Left ventricle myocardium inferior (tissue), 1 donor: ENCODE measurements at regions of chr3 and their contacts with region 1.

Region 1: DNA sequence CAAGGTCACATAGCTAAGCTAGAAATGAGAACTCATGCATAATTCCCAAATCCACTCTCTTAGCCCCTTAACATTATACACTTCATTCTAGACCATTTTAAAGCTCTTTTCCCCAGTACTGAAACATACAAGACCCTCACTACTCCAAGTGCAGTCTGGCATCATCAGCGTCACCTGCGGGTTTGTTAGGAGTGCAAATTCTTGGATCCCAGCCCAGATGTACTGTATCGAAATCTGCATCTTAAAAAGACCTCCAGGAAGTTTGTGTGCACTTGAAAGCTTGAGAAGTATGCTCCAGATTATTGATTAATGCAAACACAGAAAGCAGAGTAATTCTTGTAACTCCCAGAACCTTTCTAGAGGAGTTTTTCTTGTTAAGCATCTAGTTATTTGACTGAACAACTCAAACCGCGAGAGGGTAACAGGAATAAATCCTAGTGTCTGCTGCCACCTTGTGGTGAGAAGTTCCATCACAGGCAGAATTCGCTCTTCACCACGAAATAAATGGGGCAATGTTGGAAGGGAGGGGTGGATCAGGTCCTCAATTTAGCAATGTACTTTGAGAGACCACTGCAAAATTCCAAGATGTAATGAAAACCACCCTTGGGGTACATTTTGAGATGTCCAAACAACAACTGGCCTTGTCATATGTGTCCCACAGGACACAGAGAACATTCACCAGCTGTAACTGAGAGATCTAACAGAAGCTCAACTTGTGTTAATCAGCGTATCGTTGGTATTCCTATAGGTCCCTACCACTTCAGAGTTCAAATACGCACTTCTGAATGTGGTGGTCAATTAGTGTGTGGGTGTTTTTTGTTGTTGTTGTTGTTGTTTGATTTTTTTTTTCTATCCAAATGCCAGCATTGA is 583 bp upstream of the C3orf49 start:
- DNase-seq: peak; percentile 20
- H3K4me3 ChIP-seq: no peak overlapping the region
- H3K27ac ChIP-seq: no peak overlapping the region
- H3K4me1 ChIP-seq: peaks cover 4% of the 10 kb centered on the region
- H3K27me3 ChIP-seq: no peaks in the 10 kb centered on the region
- CTCF ChIP-seq: peak; percentile 91

Region 2: GRCh38 chr3:63349583-63350521 is 468.7 kb before region 1 on chr3:
- intact Hi-C with region 1: loop called (anchors 2 kb)
- DNase-seq: no peak
- H3K4me3 ChIP-seq: no peak overlapping the region
- H3K27ac ChIP-seq: no peak overlapping the region
- H3K4me1 ChIP-seq: no peaks in the 10 kb centered on the region
- H3K27me3 ChIP-seq: peaks cover 51% of the 10 kb centered on the region
- CTCF ChIP-seq: peak; percentile 79

Region 3: GRCh38 chr3:63753567-63753966 is 64.9 kb before region 1 on chr3:
- intact Hi-C with region 1: no loop called
- DNase-seq: no peak
- H3K4me3 ChIP-seq: no peak overlapping the region
- H3K27ac ChIP-seq: no peak overlapping the region
- H3K4me1 ChIP-seq: no peaks in the 10 kb centered on the region
- H3K27me3 ChIP-seq: no peaks in the 10 kb centered on the region
- CTCF ChIP-seq: no peak

Region 4: GRCh38 chr3:63911873-63912767 is 93.6 kb after region 1 on chr3 and contains the start of gene SCAANT1:
- intact Hi-C with region 1: no loop called
- DNase-seq: peak; percentile 92
- H3K4me3 ChIP-seq: peak within 1 kb of the TSS; percentile 78
- H3K27ac ChIP-seq: peak within 1 kb of the TSS; percentile 99
- H3K4me1 ChIP-seq: peaks cover 58% of the 10 kb centered on the region
- H3K27me3 ChIP-seq: no peaks in the 10 kb centered on the region
- CTCF ChIP-seq: peak; percentile 32
- total RNA-seq, gene SCAANT1: not detected

Region 5: DNA sequence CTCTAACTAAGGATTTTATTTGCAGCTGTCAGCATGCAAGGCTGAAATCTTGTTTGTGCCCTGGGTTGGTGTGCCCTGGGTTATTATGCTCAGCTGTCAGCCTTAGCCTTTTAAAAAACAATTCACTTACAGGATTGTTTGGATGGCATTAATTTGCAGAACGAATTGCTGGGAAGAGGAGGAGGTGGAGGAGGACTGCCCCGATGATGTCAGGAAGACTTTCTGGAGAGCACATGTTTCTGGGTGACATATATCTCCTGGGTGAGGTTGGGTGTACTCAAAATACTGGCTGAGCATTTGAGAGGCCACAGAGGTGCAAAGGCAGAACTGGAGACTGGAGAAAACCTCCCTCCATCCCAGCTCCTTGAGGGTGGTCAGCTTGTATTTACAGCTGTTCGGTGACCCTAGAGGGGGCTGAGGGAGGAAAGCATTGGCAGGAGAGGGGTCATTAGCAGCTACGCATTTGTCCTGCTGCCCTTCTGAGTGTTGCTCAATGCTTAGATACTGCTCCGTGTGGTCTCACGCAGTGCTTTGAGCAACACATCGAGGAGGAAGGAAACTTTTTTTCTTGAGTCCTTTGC is 264.5 kb after region 1 on chr3:
- intact Hi-C with region 1: no loop called
- DNase-seq: no peak
- H3K4me3 ChIP-seq: no peak overlapping the region
- H3K27ac ChIP-seq: no peak overlapping the region
- H3K4me1 ChIP-seq: no peaks in the 10 kb centered on the region
- H3K27me3 ChIP-seq: no peaks in the 10 kb centered on the region
- CTCF ChIP-seq: no peak